Activated T-helper 1 cell treated with anti-CD3 and anti-CD28 coated beads, Interleukin-12 subunit alpha, Interleukin-12 subunit beta, Interleukin-2, Interleukin-4 antibody, amounts not matched to agents 30 ng/mL and 10 ng/mL and 1 ng/mL, durations not matched to agents 14 hours and 24 hours and 36 hours (primary cell): ENCODE measurements at regions of chr19 and their contacts with region 1.

Region 1: DNA sequence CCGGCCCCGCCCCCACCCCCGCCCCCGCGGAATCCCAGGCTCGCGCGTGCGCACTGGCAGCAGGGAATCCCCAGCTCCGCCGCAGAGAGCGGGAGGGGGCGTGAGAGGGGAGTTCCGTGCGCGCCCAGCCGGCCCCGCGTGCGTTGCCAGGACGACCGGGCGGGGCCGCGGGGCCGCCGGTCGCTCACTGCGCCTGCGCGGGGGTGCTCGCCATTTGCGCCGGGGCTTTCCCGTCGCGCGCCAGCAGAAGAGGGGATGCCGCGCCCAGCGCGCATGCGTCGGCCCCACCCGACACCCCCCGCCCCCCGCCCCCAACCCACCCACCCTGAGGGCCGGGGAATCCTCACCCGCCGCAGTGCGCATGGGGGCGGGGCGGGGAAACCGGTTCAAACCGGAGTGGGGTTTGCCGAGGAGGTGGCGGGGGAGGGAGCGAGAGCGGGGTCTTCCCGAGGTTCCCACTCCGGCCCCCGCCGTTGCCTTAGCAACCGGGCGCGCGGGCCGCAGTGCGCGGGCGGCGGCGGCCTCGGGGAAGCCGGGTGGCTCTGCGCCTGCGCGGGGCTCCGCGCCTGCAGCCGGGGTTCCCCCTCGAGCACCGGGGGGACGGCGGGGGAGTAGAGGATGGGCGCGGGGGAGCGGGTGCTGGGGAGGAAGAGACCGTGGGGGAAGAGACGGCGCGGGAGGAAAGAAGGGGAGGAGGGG is 15.1 kb downstream of the CCDC124 start:
- DNase-seq: peak; percentile 96
- H3K4me3 Mint-ChIP-seq: peak overlapping the region; percentile 69
- H3K27ac Mint-ChIP-seq: peak overlapping the region; percentile 72
- H3K4me1 Mint-ChIP-seq: peaks cover 43% of the 10 kb centered on the region
- H3K27me3 Mint-ChIP-seq: peaks cover 38% of the 10 kb centered on the region

Region 2: DNA sequence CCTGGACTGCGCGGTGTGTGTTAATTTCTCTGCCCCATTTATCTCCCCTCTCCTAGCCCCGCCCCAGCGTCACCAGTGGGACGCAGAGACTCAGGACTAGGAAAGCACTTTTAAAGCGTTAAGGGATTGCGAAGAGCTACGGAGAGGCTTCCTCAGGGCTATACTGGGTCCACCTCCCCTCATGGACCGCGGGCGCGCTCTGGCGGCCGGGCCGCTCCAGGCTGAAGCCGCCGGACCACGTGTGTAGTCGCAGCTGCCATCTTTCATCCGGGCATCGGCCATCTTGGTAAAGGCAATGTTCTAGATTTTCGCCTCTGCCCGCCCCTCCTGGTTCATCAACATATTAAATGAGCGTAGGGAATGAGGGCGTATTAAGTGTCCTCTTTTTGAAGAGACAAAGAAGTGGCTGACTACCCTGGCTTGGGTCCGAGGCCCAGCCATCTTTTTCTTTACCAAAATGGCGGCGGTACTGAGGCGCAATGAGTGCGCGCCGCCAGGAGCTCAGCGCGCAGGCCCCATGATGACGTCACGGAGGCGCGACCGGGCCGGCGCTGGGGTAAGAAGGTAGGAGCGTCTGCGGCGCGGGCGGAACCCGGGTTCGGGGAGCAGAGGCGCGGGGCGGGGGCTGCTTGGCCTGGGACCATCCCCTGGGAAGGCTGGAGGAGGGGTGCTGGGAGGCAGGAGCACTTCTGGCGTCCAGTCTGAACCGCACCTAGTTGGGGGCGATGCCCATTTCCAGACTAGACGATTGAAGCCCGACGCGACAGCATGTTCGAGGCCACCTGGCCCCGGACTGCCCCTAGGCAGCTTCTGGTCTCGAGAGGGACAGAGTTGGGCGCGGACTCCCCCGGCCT is 15.3 kb before region 1 on chr19 and contains the start of gene CCDC124:
- intact Hi-C with region 1: loop called (anchors 2 kb)
- DNase-seq: peak; percentile 89
- H3K4me3 Mint-ChIP-seq: peak within 1 kb of the TSS; percentile 87
- H3K27ac Mint-ChIP-seq: peak within 1 kb of the TSS; percentile 82
- H3K4me1 Mint-ChIP-seq: peaks cover 21% of the 10 kb centered on the region
- H3K27me3 Mint-ChIP-seq: no peaks in the 10 kb centered on the region
- total RNA-seq, gene CCDC124: 122 and 128 TPM in 2 replicates

Region 3: DNA sequence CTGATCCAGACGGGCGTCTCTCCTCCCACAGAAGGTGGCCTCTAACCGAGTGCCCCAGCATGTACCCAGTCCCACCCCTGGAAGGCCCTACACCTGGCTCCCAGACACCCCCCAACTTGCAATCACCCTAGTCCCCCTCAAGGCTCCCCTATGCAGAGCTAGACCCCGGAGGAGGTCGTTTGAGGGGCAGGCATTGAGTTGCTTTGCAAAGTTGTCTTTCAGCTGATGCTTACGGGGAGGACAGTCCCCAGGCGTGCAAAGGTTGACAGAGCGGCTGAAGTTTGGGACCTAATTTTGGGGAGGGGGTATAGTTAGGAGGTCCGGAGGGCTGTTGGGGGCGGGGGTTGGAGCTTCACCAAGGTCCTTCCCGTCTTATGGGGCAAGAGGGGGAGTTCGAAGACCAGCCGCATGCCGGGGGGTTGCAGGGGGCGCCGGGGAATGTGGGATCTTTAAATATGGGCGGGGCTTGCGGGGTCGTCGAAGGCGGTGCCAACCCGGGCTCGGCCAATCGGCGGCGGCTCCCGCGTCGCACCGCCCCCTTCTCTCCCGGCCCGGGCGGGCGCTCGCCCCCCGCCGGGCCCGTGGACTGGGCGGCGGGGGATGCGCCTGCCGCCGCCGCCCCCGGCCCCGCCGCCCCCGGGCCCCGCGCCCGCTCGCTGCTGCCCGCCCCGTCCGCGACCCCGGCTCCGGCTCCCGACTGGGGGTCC is 18.7 kb after region 1 on chr19 and contains the start of gene KCNN1:
- intact Hi-C with region 1: loop called (anchors 2 kb)
- DNase-seq: no peak
- H3K4me3 Mint-ChIP-seq: no peak within 1 kb of the TSS
- H3K27ac Mint-ChIP-seq: no peak within 1 kb of the TSS
- H3K4me1 Mint-ChIP-seq: no peaks in the 10 kb centered on the region
- H3K27me3 Mint-ChIP-seq: peaks cover 42% of the 10 kb centered on the region
- total RNA-seq, gene KCNN1: not detected in 2 replicates

Region 4: GRCh38 chr19:18000935-18001778 is 53.2 kb after region 1 on chr19:
- intact Hi-C with region 1: loop called (anchors 1 kb)
- DNase-seq: peak; percentile 86
- H3K4me3 Mint-ChIP-seq: peak overlapping the region; percentile 92
- H3K27ac Mint-ChIP-seq: peak overlapping the region; percentile 95
- H3K4me1 Mint-ChIP-seq: peaks cover 27% of the 10 kb centered on the region
- H3K27me3 Mint-ChIP-seq: peaks cover 2% of the 10 kb centered on the region

Region 5: DNA sequence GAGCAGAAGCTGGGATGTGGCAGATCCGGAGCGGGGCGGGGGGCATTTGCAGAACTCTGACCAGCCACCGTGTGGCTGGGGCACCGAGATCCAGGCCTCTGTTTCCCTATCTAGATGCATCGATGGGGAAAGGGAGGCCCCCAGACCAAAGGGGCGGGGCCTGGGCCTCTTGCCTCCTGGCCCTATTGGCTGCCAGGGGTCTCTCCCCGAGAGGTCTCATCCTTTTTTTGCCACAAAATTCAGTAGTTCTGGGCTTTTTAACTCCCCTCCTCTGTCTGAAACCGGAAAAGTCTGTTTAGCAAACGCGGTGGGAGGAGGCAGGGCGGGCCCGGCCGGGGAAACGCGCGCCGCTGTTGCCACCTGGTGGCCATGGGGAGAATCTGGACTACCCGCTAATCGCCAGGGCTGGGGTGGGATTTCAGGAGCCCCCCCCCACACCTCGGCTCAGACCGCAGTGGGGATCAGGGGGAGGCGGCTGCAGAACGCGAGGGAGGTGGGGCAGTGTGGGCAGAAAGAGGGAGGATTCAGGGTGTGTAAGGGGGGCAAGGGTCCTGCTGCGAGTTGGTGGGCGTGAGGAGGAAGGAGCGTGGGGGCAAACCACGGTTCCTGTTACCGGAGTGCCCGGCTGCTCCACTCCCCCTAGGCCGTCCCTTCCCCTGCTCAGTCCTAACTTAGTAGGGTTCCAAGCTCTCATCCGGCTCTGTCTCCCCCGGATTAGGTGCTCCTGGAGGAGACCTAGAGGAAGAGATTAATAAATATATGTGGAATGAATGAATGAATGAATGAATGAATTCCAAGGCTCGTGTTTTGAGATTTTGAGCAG is 110.5 kb after region 1 on chr19:
- intact Hi-C with region 1: loop called (anchors 1 kb)
- DNase-seq: peak; percentile 74
- H3K4me3 Mint-ChIP-seq: no peak overlapping the region
- H3K27ac Mint-ChIP-seq: peak overlapping the region; percentile 52
- H3K4me1 Mint-ChIP-seq: peaks cover 17% of the 10 kb centered on the region
- H3K27me3 Mint-ChIP-seq: no peaks in the 10 kb centered on the region

Region 6: DNA sequence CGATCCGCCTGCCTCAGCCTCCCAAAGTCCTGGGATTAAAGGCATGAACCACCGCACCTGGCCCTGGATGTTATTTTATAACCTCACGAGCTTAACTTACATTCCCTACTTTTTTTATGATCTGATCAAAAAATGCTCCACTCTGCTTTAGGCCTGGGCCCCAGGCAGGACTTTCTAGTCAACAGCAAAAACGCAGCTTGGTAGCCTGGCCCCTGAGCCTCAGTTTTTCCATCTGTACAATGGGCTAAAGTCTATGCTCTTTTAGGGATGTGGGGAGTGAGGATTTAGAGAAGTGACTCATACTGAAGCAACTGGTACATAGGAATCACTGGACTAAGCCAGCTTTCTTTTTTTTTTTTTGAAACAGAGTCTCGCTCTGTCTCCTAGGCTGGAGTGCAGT is 193.1 kb after region 1 on chr19:
- intact Hi-C with region 1: no loop called
- DNase-seq: no peak
- H3K4me3 Mint-ChIP-seq: no peak overlapping the region
- H3K27ac Mint-ChIP-seq: no peak overlapping the region
- H3K4me1 Mint-ChIP-seq: no peaks in the 10 kb centered on the region
- H3K27me3 Mint-ChIP-seq: no peaks in the 10 kb centered on the region

Region 7: GRCh38 chr19:18152444-18152816 is 204.5 kb after region 1 on chr19:
- intact Hi-C with region 1: loop called (anchors 10 kb)
- DNase-seq: peak; percentile 95
- H3K4me3 Mint-ChIP-seq: peak overlapping the region; percentile 84
- H3K27ac Mint-ChIP-seq: peak overlapping the region; percentile 96
- H3K4me1 Mint-ChIP-seq: peaks cover 23% of the 10 kb centered on the region
- H3K27me3 Mint-ChIP-seq: peaks cover 3% of the 10 kb centered on the region